Pancreas (tissue), 10 donors: ENCODE measurements at regions of chr2 and their contacts with region 1.

Region 1: GRCh38 chr2:127479219-127479825 is 47.0 kb downstream of the IWS1 start:
- DNase-seq: no peak
- ATAC-seq: peak; percentile 63 to 92 (median 90)
- H3K4me3 ChIP-seq: no peak overlapping the region
- H3K27ac ChIP-seq: no peak overlapping the region
- H3K4me1 ChIP-seq: no peaks in the 10 kb centered on the region
- H3K27me3 ChIP-seq: no peaks in the 10 kb centered on the region
- CTCF ChIP-seq: peak; percentile 11 to 42 (median 37)

Region 2: GRCh38 chr2:127208313-127208712 is 271.0 kb before region 1 on chr2:
- intact Hi-C with region 1: loop called in 1 of 3 experiments (anchors 10 kb)
- DNase-seq: no peak
- ATAC-seq: no peak
- H3K4me3 ChIP-seq: no peak overlapping the region
- H3K27ac ChIP-seq: no peak overlapping the region
- H3K4me1 ChIP-seq: no peaks in the 10 kb centered on the region
- H3K27me3 ChIP-seq: no peaks in the 10 kb centered on the region
- CTCF ChIP-seq: no peak